CD8-positive, alpha-beta T cell (primary cell): ENCODE measurements at regions of chr10 and their contacts with region 1.

Region 1: GRCh38 chr10:43574001-43574892 is at the start of gene ZNF239:
- DNase-seq: peak; percentile 62 to 93 (median 82)
- ATAC-seq: peak; percentile 88
- H3K4me3 ChIP-seq: peak within 1 kb of the TSS; percentile 43 to 63
- H3K4me3 Mint-ChIP-seq: peak within 1 kb of the TSS; percentile 85
- H3K27ac ChIP-seq: peak within 1 kb of the TSS; percentile 38 to 66
- H3K27ac Mint-ChIP-seq: peak within 1 kb of the TSS; percentile 90
- H3K4me1 ChIP-seq: peaks cover 25% of the 10 kb centered on the region
- H3K4me1 Mint-ChIP-seq: peaks cover 51% of the 10 kb centered on the region
- H3K27me3 ChIP-seq: no peaks in the 10 kb centered on the region
- H3K27me3 Mint-ChIP-seq: no peaks in the 10 kb centered on the region
- CTCF ChIP-seq: no peak
- total RNA-seq, gene ZNF239: 0.75 to 1.1 TPM

Region 2: DNA sequence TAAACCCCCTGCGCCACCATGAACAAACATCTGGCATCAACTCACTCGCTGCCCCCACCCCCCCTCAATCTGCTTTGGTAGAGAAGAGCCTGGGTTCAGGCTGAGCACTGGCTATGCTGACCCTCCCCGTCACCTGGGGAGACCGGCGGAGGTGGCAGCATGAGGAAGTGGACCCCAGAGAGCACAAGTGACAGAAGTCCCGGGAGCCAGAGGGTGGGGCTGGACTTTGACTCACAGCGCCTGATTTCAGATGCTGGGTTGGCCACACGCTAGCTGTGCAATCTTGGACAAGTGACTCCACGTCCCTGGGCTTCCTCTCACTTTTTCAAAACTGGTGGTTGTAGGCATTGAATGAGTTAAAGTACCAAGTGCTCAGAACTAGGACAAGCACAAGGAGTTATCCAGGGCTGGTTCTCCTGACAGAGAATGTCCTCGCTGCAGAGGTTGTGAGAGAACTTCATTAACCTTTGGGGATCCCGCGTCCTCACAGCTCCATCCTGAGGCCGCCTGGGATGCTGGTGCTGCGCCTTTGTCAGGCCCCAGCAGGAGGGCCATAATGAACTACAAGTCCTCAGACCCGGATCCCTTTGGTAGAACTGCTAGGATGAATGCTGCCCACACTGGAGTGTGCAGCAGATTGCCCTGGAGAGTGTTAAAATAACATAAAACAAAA is 258.6 kb before region 1 on chr10:
- CTCF ChIA-PET with region 1: no interaction called
- POLR2A ChIA-PET with region 1: no interaction called
- intact Hi-C with region 1: no loop called
- DNase-seq: no peak
- ATAC-seq: no peak
- H3K4me3 ChIP-seq: no peak overlapping the region
- H3K4me3 Mint-ChIP-seq: no peak overlapping the region
- H3K27ac ChIP-seq: no peak overlapping the region
- H3K27ac Mint-ChIP-seq: no peak overlapping the region
- H3K4me1 ChIP-seq: no peaks in the 10 kb centered on the region
- H3K4me1 Mint-ChIP-seq: peaks cover 2% of the 10 kb centered on the region
- H3K27me3 ChIP-seq: no peaks in the 10 kb centered on the region
- H3K27me3 Mint-ChIP-seq: peaks cover 4% of the 10 kb centered on the region
- CTCF ChIP-seq: no peak

Region 3: GRCh38 chr10:43606322-43607198 is 32.3 kb after region 1 on chr10 and contains the start of gene ZNF485:
- CTCF ChIA-PET with region 1: no interaction called
- POLR2A ChIA-PET with region 1: interaction called, 13 read pairs
- intact Hi-C with region 1: loop called (anchors 1 to 2 kb)
- DNase-seq: peak; percentile 21 to 82 (median 67)
- ATAC-seq: peak; percentile 92
- H3K4me3 ChIP-seq: peak within 1 kb of the TSS; percentile 62 to 71
- H3K4me3 Mint-ChIP-seq: peak within 1 kb of the TSS; percentile 84
- H3K27ac ChIP-seq: peak within 1 kb of the TSS; percentile 10 to 18
- H3K27ac Mint-ChIP-seq: peak within 1 kb of the TSS; percentile 81
- H3K4me1 ChIP-seq: peaks cover 15% of the 10 kb centered on the region
- H3K4me1 Mint-ChIP-seq: peaks cover 33% of the 10 kb centered on the region
- H3K27me3 ChIP-seq: no peaks in the 10 kb centered on the region
- H3K27me3 Mint-ChIP-seq: no peaks in the 10 kb centered on the region
- CTCF ChIP-seq: no peak
- total RNA-seq, gene ZNF485: 0.92 to 1.2 TPM

Region 4: GRCh38 chr10:43816351-43817321 is 242.4 kb after region 1 on chr10:
- CTCF ChIA-PET with region 1: no interaction called
- POLR2A ChIA-PET with region 1: no interaction called
- intact Hi-C with region 1: no loop called
- DNase-seq: peak; percentile 23 to 86 (median 77)
- ATAC-seq: peak; percentile 94
- H3K4me3 ChIP-seq: peak overlapping the region in 1 of 2 experiments; percentile 2
- H3K4me3 Mint-ChIP-seq: peak overlapping the region; percentile 65
- H3K27ac ChIP-seq: peak overlapping the region in 1 of 2 experiments; percentile 36
- H3K27ac Mint-ChIP-seq: peak overlapping the region; percentile 80
- H3K4me1 ChIP-seq: peaks cover 26% of the 10 kb centered on the region
- H3K4me1 Mint-ChIP-seq: peaks cover 45% of the 10 kb centered on the region
- H3K27me3 ChIP-seq: no peaks in the 10 kb centered on the region
- H3K27me3 Mint-ChIP-seq: no peaks in the 10 kb centered on the region
- CTCF ChIP-seq: no peak

Region 5: DNA sequence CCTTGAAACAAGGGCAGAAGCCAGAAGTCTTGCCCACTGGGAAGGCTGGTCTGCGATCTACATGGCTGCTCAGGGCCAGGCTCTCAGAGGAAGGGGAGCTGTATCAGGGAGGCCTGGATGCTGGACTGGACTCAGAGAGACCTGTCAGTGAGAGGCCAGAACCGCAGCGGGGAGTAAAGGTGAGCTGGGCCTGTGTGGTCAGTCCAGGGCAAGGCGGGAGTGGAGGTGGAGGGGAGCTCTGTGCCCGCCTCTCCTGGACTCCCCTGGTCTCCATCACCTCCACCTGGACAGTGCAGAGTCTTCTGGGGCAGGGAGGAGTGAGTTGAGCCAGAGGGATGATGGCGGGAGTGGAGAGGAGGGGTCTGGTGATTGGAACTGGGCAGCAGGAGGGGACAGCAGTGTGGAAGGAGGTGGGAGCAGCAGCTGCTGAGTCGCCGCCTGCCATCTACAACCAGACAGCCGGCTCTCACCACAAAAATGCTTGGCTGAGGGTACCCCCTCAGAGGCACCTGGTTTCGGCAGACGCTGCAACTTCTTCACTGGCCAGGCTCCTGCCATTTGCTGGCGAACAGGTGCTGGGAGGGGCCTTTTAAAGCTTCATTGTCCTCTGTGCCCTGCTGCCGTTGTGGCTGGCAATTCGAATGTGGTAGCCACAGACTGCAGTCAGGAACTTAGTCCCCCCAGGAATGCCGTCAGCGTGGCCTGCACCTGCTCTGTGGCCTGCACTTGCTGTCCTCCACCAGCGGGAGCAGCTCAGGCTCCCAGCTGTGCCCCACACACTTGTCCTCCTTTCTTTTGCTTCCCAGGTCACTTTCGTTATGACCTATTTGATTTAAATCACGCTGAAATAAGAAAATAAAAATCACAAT is 1388.9 kb after region 1 on chr10:
- CTCF ChIA-PET with region 1: no interaction called
- POLR2A ChIA-PET with region 1: no interaction called
- intact Hi-C with region 1: no loop called
- DNase-seq: peak in 1 of 9 experiments; percentile 46
- ATAC-seq: no peak
- H3K4me3 ChIP-seq: no peak overlapping the region
- H3K4me3 Mint-ChIP-seq: no peak overlapping the region
- H3K27ac ChIP-seq: no peak overlapping the region
- H3K27ac Mint-ChIP-seq: no peak overlapping the region
- H3K4me1 ChIP-seq: peaks cover 28% of the 10 kb centered on the region
- H3K4me1 Mint-ChIP-seq: peaks cover 30% of the 10 kb centered on the region
- H3K27me3 ChIP-seq: no peaks in the 10 kb centered on the region
- H3K27me3 Mint-ChIP-seq: no peaks in the 10 kb centered on the region
- CTCF ChIP-seq: no peak